GM12878 (cell line): ENCODE measurements at regions of chr6 and their contacts with region 1.

Region 1: GRCh38 chr6:15413466-15414234 is 167.8 kb downstream of the JARID2 start:
- DNase-seq: no peak
- ATAC-seq: no peak
- H3K4me3 ChIP-seq: no peak overlapping the region
- H3K27ac ChIP-seq: no peak overlapping the region
- H3K4me1 ChIP-seq: peaks cover 24% of the 10 kb centered on the region
- H3K27me3 ChIP-seq: no peaks in the 10 kb centered on the region
- CTCF ChIP-seq: no peak
- EP300 ChIP-seq: no peak
- POLR2A ChIP-seq: no peak
- RAD21 ChIP-seq: no peak

Region 2: GRCh38 chr6:15399641-15400470 is 13.8 kb before region 1 on chr6:
- CTCF ChIA-PET with region 1: interaction called, 10 read pairs
- POLR2A ChIA-PET with region 1: interaction called, 8 read pairs
- RAD21 ChIA-PET with region 1: interaction called, 8 read pairs
- SMC1A ChIA-PET with region 1: interaction called, 60 read pairs
- in situ Hi-C with region 1: no loop called
- intact Hi-C with region 1: no loop called
- DNase-seq: no peak
- ATAC-seq: no peak
- H3K4me3 ChIP-seq: peak overlapping the region; percentile 5; the same call in 1 of the 2 replicates
- H3K27ac ChIP-seq: no peak overlapping the region
- H3K4me1 ChIP-seq: peaks cover 23% of the 10 kb centered on the region
- H3K27me3 ChIP-seq: no peaks in the 10 kb centered on the region
- CTCF ChIP-seq: no peak
- EP300 ChIP-seq: no peak
- POLR2A ChIP-seq: no peak
- RAD21 ChIP-seq: no peak

Region 3: GRCh38 chr6:15441215-15441868 is 27.7 kb after region 1 on chr6:
- CTCF ChIA-PET with region 1: interaction called, 5 read pairs
- POLR2A ChIA-PET with region 1: no interaction called
- RAD21 ChIA-PET with region 1: interaction called, 41 read pairs
- SMC1A ChIA-PET with region 1: interaction called, 143 read pairs
- in situ Hi-C with region 1: no loop called
- intact Hi-C with region 1: no loop called
- DNase-seq: no peak
- ATAC-seq: peak; percentile 74
- H3K4me3 ChIP-seq: no peak overlapping the region
- H3K27ac ChIP-seq: no peak overlapping the region
- H3K4me1 ChIP-seq: peaks cover 29% of the 10 kb centered on the region
- H3K27me3 ChIP-seq: no peaks in the 10 kb centered on the region
- CTCF ChIP-seq: peak; percentile 79 to 83 (median 79)
- EP300 ChIP-seq: no peak
- POLR2A ChIP-seq: no peak
- RAD21 ChIP-seq: peak; percentile 87